Colonic mucosa (tissue), 4 donors: ENCODE measurements at regions of chr10 and their contacts with region 1.

Region 1: GRCh38 chr10:87531908-87532622 is 27.4 kb downstream of the MINPP1 start:
- DNase-seq: no peak
- H3K4me3 ChIP-seq: no peak overlapping the region
- H3K27ac ChIP-seq: peak overlapping the region; percentile 12
- H3K4me1 ChIP-seq: no peaks in the 10 kb centered on the region
- H3K27me3 ChIP-seq: no peaks in the 10 kb centered on the region
- CTCF ChIP-seq: no peak

Region 2: DNA sequence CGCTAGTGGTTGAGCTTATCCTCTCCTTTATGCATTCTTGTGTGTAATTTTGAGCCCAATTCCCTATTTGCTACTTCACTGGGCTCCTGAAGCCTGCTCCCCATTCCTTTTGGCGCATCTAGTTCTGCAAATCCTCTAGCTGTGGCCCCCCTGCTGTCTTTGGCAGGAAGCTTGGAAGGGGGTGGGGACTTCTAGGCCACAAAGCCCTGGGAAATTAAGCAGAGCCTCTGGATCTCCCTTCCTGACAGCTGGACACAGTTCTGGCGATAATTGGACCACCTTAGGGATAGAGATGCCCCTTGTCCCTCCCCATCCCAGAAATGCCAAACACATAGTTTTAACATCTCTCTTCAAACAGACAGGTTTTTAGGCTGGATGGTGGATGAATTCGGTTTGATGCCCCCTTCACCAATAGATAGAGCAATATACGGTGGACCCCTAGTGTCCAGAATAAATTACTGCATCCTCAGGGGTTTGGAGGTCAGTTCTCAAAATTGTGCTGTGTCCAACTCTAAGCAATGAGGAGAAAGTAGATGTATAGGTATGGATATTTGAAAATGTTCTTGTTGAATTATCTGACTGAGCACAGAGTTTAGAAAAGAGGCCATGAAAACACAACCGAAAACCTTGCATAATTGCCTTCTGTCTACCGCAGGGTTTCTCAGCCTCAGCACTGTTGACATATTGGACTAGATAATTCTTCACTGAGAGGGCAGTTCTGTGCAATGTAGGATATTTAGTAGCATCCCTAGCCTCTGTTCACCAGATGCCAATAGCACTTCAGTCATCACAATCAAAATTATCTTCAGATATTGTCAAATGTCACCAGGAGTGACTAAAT is 203.1 kb after region 1 on chr10:
- intact Hi-C with region 1: loop called (anchors 5 kb)
- DNase-seq: no peak
- H3K4me3 ChIP-seq: no peak overlapping the region
- H3K27ac ChIP-seq: no peak overlapping the region
- H3K4me1 ChIP-seq: no peaks in the 10 kb centered on the region
- H3K27me3 ChIP-seq: peaks cover 4% of the 10 kb centered on the region
- CTCF ChIP-seq: peak; percentile 75